ENCODE measurements at regions of chr6 and their contacts with region 1.

Region 1: DNA sequence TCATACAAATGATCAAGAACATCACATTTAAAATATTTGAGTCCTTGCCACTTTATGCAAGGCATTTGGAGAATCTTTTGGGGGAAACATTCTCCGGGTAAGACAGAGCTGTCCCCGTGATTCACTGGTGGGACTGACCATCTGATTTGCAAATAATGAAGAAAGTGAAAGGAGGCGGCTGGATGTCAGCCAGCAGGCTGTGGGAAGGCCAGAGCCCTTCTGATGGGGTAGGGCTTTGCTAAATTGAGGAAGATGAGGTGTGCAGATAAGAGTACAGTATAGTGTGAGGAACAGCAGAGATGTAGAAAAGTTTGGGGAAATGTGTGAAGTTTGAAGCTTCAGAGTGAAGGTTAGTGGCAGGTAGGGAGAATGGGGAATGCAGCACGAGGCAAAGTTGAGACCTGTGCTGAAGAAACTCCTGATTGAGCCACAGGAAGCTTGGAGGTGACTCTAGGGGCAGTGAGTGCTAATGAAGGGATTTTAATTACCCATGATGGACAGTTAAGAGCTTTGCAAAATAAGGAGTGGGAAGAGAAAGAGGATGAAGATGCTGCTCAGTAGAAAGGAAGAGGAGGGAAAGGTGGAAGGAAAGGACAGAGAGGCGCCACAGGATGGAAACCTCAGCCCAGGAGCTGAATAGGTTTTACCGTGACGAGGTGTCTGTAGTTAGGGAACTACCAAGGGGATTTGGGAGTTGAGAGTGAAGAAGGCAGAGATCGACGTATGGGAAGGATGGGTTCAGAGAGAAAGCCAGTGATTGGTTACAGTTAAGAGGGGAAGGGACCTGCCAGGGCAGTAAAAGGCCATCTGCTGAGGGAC is 68.7 kb downstream of the SNX9 start:
- DNase-seq: no peak
- ATAC-seq: no peak
- H3K4me3 Mint-ChIP-seq: no peak overlapping the region
- H3K27ac Mint-ChIP-seq: no peak overlapping the region
- H3K4me1 Mint-ChIP-seq: peaks cover 32% of the 10 kb centered on the region
- H3K27me3 Mint-ChIP-seq: no peaks in the 10 kb centered on the region
- CTCF ChIP-seq: no peak

Region 2: GRCh38 chr6:157912326-157912725 is 20.6 kb after region 1 on chr6:
- CTCF ChIA-PET with region 1: no interaction called
- POLR2A ChIA-PET with region 1: interaction called, 10 read pairs
- intact Hi-C with region 1: no loop called
- DNase-seq: no peak
- ATAC-seq: no peak
- H3K4me3 Mint-ChIP-seq: no peak overlapping the region
- H3K27ac Mint-ChIP-seq: no peak overlapping the region
- H3K4me1 Mint-ChIP-seq: peaks cover 27% of the 10 kb centered on the region
- H3K27me3 Mint-ChIP-seq: no peaks in the 10 kb centered on the region
- CTCF ChIP-seq: no peak